Caco-2 (cell line): ENCODE measurements at regions of chr11 and their contacts with region 1.

Region 1: DNA sequence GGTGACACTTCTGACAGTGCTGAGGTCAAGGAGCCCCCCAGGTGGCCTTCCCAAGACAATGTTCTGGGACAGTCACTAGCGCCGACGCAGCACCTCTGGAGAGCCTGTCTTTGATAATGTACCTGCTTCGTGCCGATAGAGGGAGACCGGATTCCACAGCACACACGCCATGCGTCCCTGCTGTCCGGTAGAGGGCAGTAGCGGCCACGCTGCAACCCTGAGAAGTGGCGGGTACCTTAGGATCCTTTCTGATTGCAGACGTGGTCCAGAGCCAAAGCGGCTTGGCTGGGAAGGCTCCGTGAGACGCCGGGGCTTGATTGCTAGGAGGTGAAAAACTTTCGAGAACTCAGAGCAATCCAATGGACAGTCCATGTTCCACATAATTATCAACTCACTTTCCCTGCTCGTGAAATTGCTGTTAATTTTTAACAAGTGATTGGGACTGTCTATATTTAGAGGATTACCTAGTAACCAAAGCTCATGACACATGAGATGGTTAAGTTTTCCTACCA is 11.4 kb upstream of the BARX2 start:
- DNase-seq: peak; percentile 95 to 96
- H3K4me3 ChIP-seq: 0 out of 2 replicates have a peak overlapping the region, but pooled peaks have one; percentile 19
- H3K4me3 Mint-ChIP-seq: no peak overlapping the region
- H3K27ac Mint-ChIP-seq: no peak overlapping the region
- H3K4me1 ChIP-seq: peaks cover 10% of the 10 kb centered on the region; the same call in 1 of the 2 replicates
- H3K4me1 Mint-ChIP-seq: no peaks in the 10 kb centered on the region
- H3K27me3 ChIP-seq: no peaks in the 10 kb centered on the region
- H3K27me3 Mint-ChIP-seq: peaks cover 28% of the 10 kb centered on the region
- CTCF ChIP-seq: peak; percentile 100

Region 2: DNA sequence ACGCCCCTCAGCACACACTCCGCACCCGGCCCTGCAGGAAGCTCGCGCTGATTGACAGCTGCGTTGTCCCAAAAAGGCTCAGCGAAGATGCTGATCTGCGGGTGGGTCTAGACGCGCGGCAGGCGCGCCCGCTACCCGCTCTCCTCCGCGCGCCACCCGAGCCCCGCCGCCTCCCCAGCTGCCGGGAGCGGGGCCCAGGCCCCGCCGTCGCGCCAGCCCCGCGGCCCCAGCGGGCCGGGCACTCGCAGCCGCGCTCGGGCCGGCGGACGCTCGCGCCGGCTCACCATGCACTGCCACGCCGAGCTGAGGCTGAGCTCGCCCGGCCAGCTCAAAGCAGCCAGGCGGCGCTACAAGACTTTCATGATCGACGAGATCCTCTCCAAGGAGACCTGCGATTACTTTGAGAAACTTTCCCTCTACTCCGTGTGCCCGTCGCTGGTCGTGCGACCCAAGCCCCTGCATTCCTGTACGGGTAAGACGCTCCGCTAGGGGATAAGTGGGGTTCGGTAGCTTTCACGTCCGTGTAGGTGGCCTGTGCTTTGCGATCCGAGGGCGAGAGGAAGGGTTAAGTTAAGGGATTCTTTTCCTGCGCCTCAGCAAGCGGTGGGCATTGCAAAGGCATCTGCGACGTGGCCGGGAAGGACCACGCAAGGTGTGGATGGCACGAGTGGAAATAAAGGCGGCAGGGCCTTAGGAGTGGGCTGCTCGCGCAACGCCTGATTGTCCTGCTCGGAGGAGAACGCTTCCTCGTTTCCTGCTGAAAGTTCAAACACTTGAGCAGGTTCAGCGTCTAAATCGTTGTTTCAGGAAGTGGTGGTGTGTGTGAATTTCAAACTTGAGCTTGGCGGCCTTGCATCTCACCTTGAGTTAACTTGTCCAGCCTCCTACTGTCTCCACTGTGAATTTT is 11.8 kb after region 1 on chr11 and contains the start of gene BARX2:
- CTCF ChIA-PET with region 1: interaction called, 32 read pairs
- POLR2A ChIA-PET with region 1: no interaction called
- intact Hi-C with region 1: loop called (anchors 1 kb)
- DNase-seq: peak; percentile 88 to 90
- H3K4me3 ChIP-seq: peak within 1 kb of the TSS; percentile 50
- H3K4me3 Mint-ChIP-seq: peak within 1 kb of the TSS; percentile 77
- H3K27ac Mint-ChIP-seq: peak within 1 kb of the TSS; percentile 27
- H3K4me1 ChIP-seq: 0 out of 2 replicates have a peak, but pooled peaks cover 6% of the 10 kb centered on the region
- H3K4me1 Mint-ChIP-seq: peaks cover 6% of the 10 kb centered on the region
- H3K27me3 ChIP-seq: peaks cover 6% of the 10 kb centered on the region
- H3K27me3 Mint-ChIP-seq: peaks cover 30% of the 10 kb centered on the region
- CTCF ChIP-seq: peak; percentile 71 to 96
- total RNA-seq, gene BARX2: 0.82 and 1.1 TPM in 2 replicates

Region 3: DNA sequence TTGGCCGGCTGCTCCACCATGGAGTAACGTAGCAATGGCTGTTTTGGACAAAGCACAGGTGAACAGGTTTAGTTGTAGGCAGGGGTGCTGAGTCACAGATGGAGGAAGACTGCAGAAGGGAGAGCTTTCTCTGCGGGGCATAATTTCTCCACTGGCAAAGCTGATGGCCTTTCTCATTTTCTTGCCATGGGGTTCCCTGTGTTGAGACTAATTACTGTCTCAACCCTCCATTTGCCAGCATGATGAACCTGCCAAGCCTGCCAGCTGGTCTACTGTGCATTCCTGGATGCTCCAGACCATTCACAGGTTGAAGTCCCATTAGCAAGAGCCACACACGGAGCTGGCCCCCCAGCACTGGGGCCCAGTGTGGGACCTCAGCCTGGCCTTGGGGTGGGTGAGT is 213.8 kb after region 1 on chr11:
- CTCF ChIA-PET with region 1: no interaction called
- POLR2A ChIA-PET with region 1: no interaction called
- intact Hi-C with region 1: loop called (anchors 5 kb)
- DNase-seq: no peak
- H3K4me3 ChIP-seq: no peak overlapping the region
- H3K4me3 Mint-ChIP-seq: no peak overlapping the region
- H3K27ac Mint-ChIP-seq: no peak overlapping the region
- H3K4me1 ChIP-seq: no peaks in the 10 kb centered on the region
- H3K4me1 Mint-ChIP-seq: no peaks in the 10 kb centered on the region
- H3K27me3 ChIP-seq: no peaks in the 10 kb centered on the region
- H3K27me3 Mint-ChIP-seq: no peaks in the 10 kb centered on the region
- CTCF ChIP-seq: no peak

Region 4: GRCh38 chr11:129652828-129653227 is 288.6 kb after region 1 on chr11:
- CTCF ChIA-PET with region 1: no interaction called
- POLR2A ChIA-PET with region 1: no interaction called
- intact Hi-C with region 1: loop called (anchors 1 kb)
- DNase-seq: no peak
- H3K4me3 ChIP-seq: no peak overlapping the region
- H3K4me3 Mint-ChIP-seq: no peak overlapping the region
- H3K27ac Mint-ChIP-seq: no peak overlapping the region
- H3K4me1 ChIP-seq: no peaks in the 10 kb centered on the region
- H3K4me1 Mint-ChIP-seq: no peaks in the 10 kb centered on the region
- H3K27me3 ChIP-seq: no peaks in the 10 kb centered on the region
- H3K27me3 Mint-ChIP-seq: peaks cover 3% of the 10 kb centered on the region
- CTCF ChIP-seq: no peak

Region 5: GRCh38 chr11:129750349-129751292 is 386.4 kb after region 1 on chr11:
- CTCF ChIA-PET with region 1: interaction called, 21 read pairs
- POLR2A ChIA-PET with region 1: no interaction called
- intact Hi-C with region 1: loop called (anchors 1 kb)
- DNase-seq: peak; percentile 80 to 93
- H3K4me3 ChIP-seq: peak overlapping the region; percentile 18; the same call in 1 of the 2 replicates
- H3K4me3 Mint-ChIP-seq: peak overlapping the region; percentile 50
- H3K27ac Mint-ChIP-seq: no peak overlapping the region
- H3K4me1 ChIP-seq: peaks cover 5% of the 10 kb centered on the region
- H3K4me1 Mint-ChIP-seq: no peaks in the 10 kb centered on the region
- H3K27me3 ChIP-seq: no peaks in the 10 kb centered on the region
- H3K27me3 Mint-ChIP-seq: no peaks in the 10 kb centered on the region
- CTCF ChIP-seq: peak; percentile 100